ENCODE measurements at regions of chr3 and their contacts with region 1.

Region 1: GRCh38 chr3:129439817-129440617 is at the starts of genes IFT122 and MBD4:
- DNase-seq: peak; percentile 100
- H3K4me3 Mint-ChIP-seq: peak within 1 kb of the TSS; percentile 94
- H3K27ac Mint-ChIP-seq: peak within 1 kb of the TSS; percentile 99
- H3K4me1 Mint-ChIP-seq: peaks cover 55% of the 10 kb centered on the region
- H3K27me3 Mint-ChIP-seq: no peaks in the 10 kb centered on the region
- total RNA-seq, gene IFT122: 12.3 and 13.7 TPM in 2 replicates
- total RNA-seq, gene MBD4: 40.8 and 50.7 TPM in 2 replicates

Region 2: GRCh38 chr3:128650096-128651050 is 789.6 kb before region 1 on chr3 and contains the start of gene RPN1:
- intact Hi-C with region 1: loop called (anchors 1 kb)
- DNase-seq: peak; percentile 98
- H3K4me3 Mint-ChIP-seq: peak within 1 kb of the TSS; percentile 88
- H3K27ac Mint-ChIP-seq: peak within 1 kb of the TSS; percentile 92
- H3K4me1 Mint-ChIP-seq: peaks cover 32% of the 10 kb centered on the region
- H3K27me3 Mint-ChIP-seq: no peaks in the 10 kb centered on the region
- total RNA-seq, gene RPN1: 192 and 194 TPM in 2 replicates

Region 3: DNA sequence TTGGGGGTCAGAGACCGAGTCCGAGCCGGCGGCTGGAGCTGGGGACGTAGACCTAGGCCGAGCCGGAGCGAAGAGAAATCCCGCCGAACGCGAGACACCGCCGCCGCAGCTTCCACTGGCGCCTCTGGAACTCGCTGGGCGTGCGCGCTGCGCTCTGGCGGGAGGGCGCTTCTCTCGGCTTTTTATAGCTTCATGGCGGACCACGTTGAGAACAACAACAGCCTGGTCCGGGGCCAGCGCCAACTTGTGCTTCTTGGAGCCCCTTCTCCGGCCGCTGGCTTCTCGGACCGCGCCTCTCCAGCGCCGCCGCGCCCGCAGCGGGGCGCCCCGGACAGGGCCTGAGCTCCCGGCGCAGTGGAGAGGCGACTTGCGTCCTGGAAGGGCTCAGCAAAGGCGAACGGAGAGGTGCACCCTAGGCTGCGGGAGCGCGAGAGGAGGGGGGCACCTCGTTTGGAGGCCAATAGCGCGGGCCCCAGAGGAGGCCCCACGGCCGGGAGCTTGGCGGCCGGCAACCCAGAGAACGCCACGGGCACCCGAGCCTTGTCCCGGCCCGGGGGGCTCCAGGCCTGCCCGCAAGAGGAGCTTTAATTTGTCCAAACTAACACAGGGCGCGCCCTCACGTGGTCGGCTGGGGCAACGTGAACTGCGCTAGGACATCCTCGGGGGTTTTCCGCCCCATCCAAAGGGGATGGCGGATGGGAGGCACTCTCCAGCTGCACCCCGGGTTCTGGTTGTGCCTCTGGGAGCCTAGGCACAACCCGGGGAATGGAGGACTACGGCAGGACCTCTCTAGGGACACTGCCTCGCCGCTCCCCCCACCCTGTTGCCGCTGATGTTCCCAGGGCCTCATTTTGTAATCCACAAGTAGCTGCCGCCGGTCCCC is 123.6 kb before region 1 on chr3:
- intact Hi-C with region 1: loop called (anchors 1 kb)
- DNase-seq: peak; percentile 98
- H3K4me3 Mint-ChIP-seq: peak overlapping the region; percentile 92
- H3K27ac Mint-ChIP-seq: peak overlapping the region; percentile 74
- H3K4me1 Mint-ChIP-seq: peaks cover 27% of the 10 kb centered on the region
- H3K27me3 Mint-ChIP-seq: no peaks in the 10 kb centered on the region

Region 4: GRCh38 chr3:129428376-129429079 is 11.5 kb before region 1 on chr3 and contains the start of gene EFCAB12:
- intact Hi-C with region 1: loop called (anchors 1 kb)
- DNase-seq: peak; percentile 97
- H3K4me3 Mint-ChIP-seq: peak within 1 kb of the TSS; percentile 78
- H3K27ac Mint-ChIP-seq: peak within 1 kb of the TSS; percentile 52
- H3K4me1 Mint-ChIP-seq: peaks cover 33% of the 10 kb centered on the region
- H3K27me3 Mint-ChIP-seq: peaks cover 3% of the 10 kb centered on the region
- total RNA-seq, gene EFCAB12: 0.40 and 0.63 TPM in 2 replicates

Region 5: GRCh38 chr3:129461022-129461421 is 21.0 kb after region 1 on chr3:
- intact Hi-C with region 1: no loop called
- DNase-seq: no peak
- H3K4me3 Mint-ChIP-seq: no peak overlapping the region
- H3K27ac Mint-ChIP-seq: peak overlapping the region; percentile 19
- H3K4me1 Mint-ChIP-seq: peaks cover 4% of the 10 kb centered on the region
- H3K27me3 Mint-ChIP-seq: no peaks in the 10 kb centered on the region

Region 6: GRCh38 chr3:129593595-129594339 is 153.8 kb after region 1 on chr3:
- intact Hi-C with region 1: no loop called
- DNase-seq: peak; percentile 87
- H3K4me3 Mint-ChIP-seq: peak overlapping the region; percentile 60
- H3K27ac Mint-ChIP-seq: peak overlapping the region; percentile 59
- H3K4me1 Mint-ChIP-seq: peaks cover 14% of the 10 kb centered on the region
- H3K27me3 Mint-ChIP-seq: peaks cover 48% of the 10 kb centered on the region

Region 7: GRCh38 chr3:129893581-129894070 is 453.6 kb after region 1 on chr3 and contains the start of gene TMCC1:
- intact Hi-C with region 1: loop called (anchors 1 kb)
- DNase-seq: peak; percentile 97
- H3K4me3 Mint-ChIP-seq: peak within 1 kb of the TSS; percentile 92
- H3K27ac Mint-ChIP-seq: peak within 1 kb of the TSS; percentile 90
- H3K4me1 Mint-ChIP-seq: peaks cover 36% of the 10 kb centered on the region
- H3K27me3 Mint-ChIP-seq: no peaks in the 10 kb centered on the region
- total RNA-seq, gene TMCC1: 19.2 and 21.0 TPM in 2 replicates

Measured in activated CD4-positive, alpha-beta T cell treated with anti-CD3 and anti-CD28 coated beads, Interleukin-2, amount 10 ng/mL, durations not matched to agents 24 days and 14 days (primary cell).